ENCODE measurements at regions of chr2 and their contacts with region 1.

Region 1: DNA sequence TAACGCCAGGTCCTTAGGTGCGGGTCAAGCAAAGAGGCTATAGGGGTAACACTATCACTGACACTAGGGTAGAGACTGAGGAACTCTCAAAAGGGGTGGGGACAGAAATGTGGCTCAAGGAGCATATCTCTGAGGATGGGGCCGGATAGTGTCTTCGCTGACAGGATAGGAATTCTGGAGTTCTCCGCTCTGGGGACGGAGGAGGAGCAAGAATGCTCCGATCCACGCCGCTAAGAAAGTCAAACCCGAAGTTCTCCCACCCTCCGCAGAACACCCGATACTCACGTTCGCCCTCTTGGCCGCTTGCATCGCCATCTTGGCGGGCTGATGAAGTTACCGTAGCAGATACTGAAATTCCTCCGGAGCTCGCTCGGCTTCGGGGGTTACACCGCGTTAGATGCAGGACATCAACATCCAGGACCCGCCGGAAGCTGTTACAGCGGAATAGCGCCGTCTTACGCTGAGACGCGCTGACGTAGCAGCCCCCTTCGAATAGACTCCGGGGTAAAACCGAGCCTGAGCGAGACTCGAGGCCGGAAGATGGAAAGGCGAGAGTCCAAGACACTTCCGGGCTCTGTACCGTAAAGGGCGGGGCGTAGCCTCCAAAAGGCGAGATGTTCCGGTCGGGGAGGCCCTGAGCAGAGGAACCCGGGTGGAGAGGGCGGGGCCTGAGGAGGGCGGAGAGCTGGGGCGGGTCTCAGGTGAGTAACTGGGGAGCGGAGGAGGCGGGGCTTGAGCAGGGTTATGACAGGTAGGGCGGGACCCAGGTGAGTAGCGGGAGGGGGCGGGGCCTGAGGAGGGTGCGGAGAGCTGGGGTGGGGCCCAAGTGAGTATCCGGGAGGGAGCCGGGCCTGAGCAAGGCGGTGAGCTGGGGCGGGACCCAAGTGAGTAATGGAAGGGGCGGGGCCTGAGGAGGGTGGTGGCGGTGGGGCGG is at the start of gene SF3B6:
- DNase-seq: peak; percentile 97 to 100 (median 100)
- ATAC-seq: peak; percentile 89
- H3K4me3 ChIP-seq: peak within 1 kb of the TSS; percentile 97
- H3K4me3 Mint-ChIP-seq: peak within 1 kb of the TSS; percentile 93 to 99 (median 98)
- H3K27ac ChIP-seq: peak within 1 kb of the TSS; percentile 78
- H3K27ac Mint-ChIP-seq: peak within 1 kb of the TSS; percentile 96 to 99 (median 99)
- H3K4me1 ChIP-seq: peaks cover 13 to 21% of the 10 kb centered on the region in 2 donors
- H3K4me1 Mint-ChIP-seq: peaks cover 14 to 47% (median 42%) of the 10 kb centered on the region in 7 donors
- H3K27me3 ChIP-seq: no peaks in the 10 kb centered on the region
- H3K27me3 Mint-ChIP-seq: no peaks in the 10 kb centered on the region
- total RNA-seq, gene SF3B6: 42.4 to 100 (median 49.7) TPM

Region 2: DNA sequence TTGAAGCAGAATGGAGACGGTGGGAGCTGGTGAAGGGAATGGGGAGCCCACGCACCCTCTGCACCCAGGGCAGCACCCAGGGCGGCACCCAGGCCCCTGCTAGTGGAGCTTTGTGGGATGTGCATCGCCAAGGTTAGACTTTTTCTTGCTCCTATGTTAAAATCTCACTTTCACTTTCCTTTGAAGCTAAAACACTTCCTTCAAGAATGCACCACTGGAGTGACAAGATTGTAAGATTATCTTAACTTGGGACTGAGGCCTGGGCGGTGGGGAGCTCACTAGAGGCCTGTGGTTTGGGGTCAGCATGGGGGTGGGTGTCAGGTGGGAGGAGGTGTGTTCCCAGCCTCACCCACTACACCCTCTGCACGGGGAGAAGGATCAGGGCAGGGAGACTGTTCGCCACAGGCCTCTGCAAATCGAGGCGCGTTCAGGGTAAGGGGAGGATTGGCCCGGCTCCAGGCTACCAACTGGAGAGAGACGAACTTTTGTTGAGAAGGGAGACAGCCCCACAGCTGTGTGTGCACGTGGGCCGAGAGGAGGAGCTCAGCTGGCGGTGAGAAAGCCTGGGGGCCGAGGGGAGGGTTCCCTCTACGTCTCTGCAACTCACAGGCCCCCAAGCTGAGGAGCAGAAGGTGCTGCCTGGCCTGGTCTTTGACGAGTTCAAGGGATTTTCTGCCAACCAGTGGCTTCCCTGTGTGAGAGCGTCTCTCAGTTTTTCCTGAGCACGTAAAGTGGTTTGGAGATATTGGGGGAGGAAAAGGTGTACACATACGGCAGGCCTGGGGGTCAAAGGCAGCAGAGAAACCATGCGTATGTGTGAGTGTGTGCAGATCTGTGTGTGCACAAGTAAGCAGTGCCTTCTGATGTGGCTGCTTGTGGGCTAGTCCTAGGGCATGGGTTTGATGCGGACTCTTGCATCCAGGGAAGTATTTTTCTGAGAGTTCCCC is 543.5 kb before region 1 on chr2:
- CTCF ChIA-PET with region 1: no interaction called
- POLR2A ChIA-PET with region 1: no interaction called
- intact Hi-C with region 1: loop called in 1 of 2 experiments (anchors 5 kb)
- DNase-seq: peak; percentile 30 to 71 (median 64)
- ATAC-seq: peak; percentile 74
- H3K4me3 ChIP-seq: peak overlapping the region; percentile 72
- H3K4me3 Mint-ChIP-seq: peak overlapping the region; percentile 90 to 99 (median 95)
- H3K27ac ChIP-seq: peak overlapping the region; percentile 66
- H3K27ac Mint-ChIP-seq: peak overlapping the region; percentile 94 to 99 (median 98)
- H3K4me1 ChIP-seq: peaks cover 13 to 32% of the 10 kb centered on the region in 2 donors
- H3K4me1 Mint-ChIP-seq: peaks cover 39 to 68% (median 59%) of the 10 kb centered on the region in 7 donors
- H3K27me3 ChIP-seq: no peaks in the 10 kb centered on the region
- H3K27me3 Mint-ChIP-seq: no peaks in the 10 kb centered on the region

Region 3: GRCh38 chr2:23939987-23940717 is 136.0 kb before region 1 on chr2 and contains the start of gene UBXN2A:
- CTCF ChIA-PET with region 1: no interaction called
- POLR2A ChIA-PET with region 1: interaction called, 5 read pairs
- intact Hi-C with region 1: loop called (anchors 1 kb)
- DNase-seq: peak; percentile 59 to 85 (median 79)
- ATAC-seq: peak; percentile 96
- H3K4me3 ChIP-seq: peak within 1 kb of the TSS; percentile 94
- H3K4me3 Mint-ChIP-seq: peak within 1 kb of the TSS; percentile 85 to 97 (median 92)
- H3K27ac ChIP-seq: peak within 1 kb of the TSS; percentile 76
- H3K27ac Mint-ChIP-seq: peak within 1 kb of the TSS; percentile 85 to 94 (median 86)
- H3K4me1 ChIP-seq: peaks cover 6 to 14% of the 10 kb centered on the region in 2 donors
- H3K4me1 Mint-ChIP-seq: peaks cover 23 to 40% (median 34%) of the 10 kb centered on the region in 7 donors
- H3K27me3 ChIP-seq: no peaks in the 10 kb centered on the region
- H3K27me3 Mint-ChIP-seq: peaks cover 0 to 16% (median 7%) of the 10 kb centered on the region in 5 donors
- total RNA-seq, gene UBXN2A: 11.5 to 13.5 (median 12.4) TPM

Region 4: GRCh38 chr2:24123195-24123921 is 47.2 kb after region 1 on chr2 and contains the starts of genes FAM228B and PFN4:
- CTCF ChIA-PET with region 1: no interaction called
- POLR2A ChIA-PET with region 1: no interaction called
- intact Hi-C with region 1: loop called in 1 of 2 experiments (anchors 1 kb)
- DNase-seq: peak; percentile 12 to 76 (median 36)
- ATAC-seq: peak; percentile 93
- H3K4me3 ChIP-seq: peak within 1 kb of the TSS; percentile 56
- H3K4me3 Mint-ChIP-seq: peak within 1 kb of the TSS; percentile 74 to 91 (median 82)
- H3K27ac ChIP-seq: peak within 1 kb of the TSS; percentile 49
- H3K27ac Mint-ChIP-seq: peak within 1 kb of the TSS; percentile 36 to 79 (median 67)
- H3K4me1 ChIP-seq: peaks cover 0 to 5% of the 10 kb centered on the region in 2 donors
- H3K4me1 Mint-ChIP-seq: peaks cover 10 to 15% (median 15%) of the 10 kb centered on the region in 7 donors
- H3K27me3 ChIP-seq: no peaks in the 10 kb centered on the region
- H3K27me3 Mint-ChIP-seq: peaks cover 0 to 2% (median 0%) of the 10 kb centered on the region in 5 donors
- total RNA-seq, gene FAM228B: 7.8 to 27.5 (median 24.8) TPM
- total RNA-seq, gene PFN4: not detected

Region 5: GRCh38 chr2:24490674-24491625 is 414.8 kb after region 1 on chr2 and contains the start of gene NCOA1:
- CTCF ChIA-PET with region 1: no interaction called
- POLR2A ChIA-PET with region 1: no interaction called
- intact Hi-C with region 1: loop called in 1 of 2 experiments (anchors 2 kb)
- DNase-seq: peak; percentile 82 to 92 (median 90)
- ATAC-seq: peak; percentile 91
- H3K4me3 ChIP-seq: peak within 1 kb of the TSS; percentile 63
- H3K4me3 Mint-ChIP-seq: peak within 1 kb of the TSS; percentile 80 to 95 (median 90)
- H3K27ac ChIP-seq: peak within 1 kb of the TSS; percentile 93
- H3K27ac Mint-ChIP-seq: peak within 1 kb of the TSS; percentile 87 to 98 (median 93)
- H3K4me1 ChIP-seq: peaks cover 26 to 48% of the 10 kb centered on the region in 2 donors
- H3K4me1 Mint-ChIP-seq: peaks cover 46 to 62% (median 59%) of the 10 kb centered on the region in 7 donors
- H3K27me3 ChIP-seq: no peaks in the 10 kb centered on the region
- H3K27me3 Mint-ChIP-seq: peaks cover 0 to 11% (median 0%) of the 10 kb centered on the region in 5 donors
- total RNA-seq, gene NCOA1: 20.9 to 72.8 (median 46.6) TPM

Region 6: GRCh38 chr2:25041928-25042320 is 965.7 kb after region 1 on chr2 and contains the start of gene EFR3B:
- CTCF ChIA-PET with region 1: no interaction called
- POLR2A ChIA-PET with region 1: no interaction called
- intact Hi-C with region 1: loop called in 1 of 2 experiments (anchors 1 kb)
- DNase-seq: peak; percentile 77 to 88 (median 86)
- ATAC-seq: peak; percentile 99
- H3K4me3 ChIP-seq: peak within 1 kb of the TSS; percentile 73
- H3K4me3 Mint-ChIP-seq: peak within 1 kb of the TSS; percentile 79 to 91 (median 89)
- H3K27ac ChIP-seq: peak within 1 kb of the TSS; percentile 18
- H3K27ac Mint-ChIP-seq: peak within 1 kb of the TSS in 6 of 9 donors; percentile 8 to 88 (median 54)
- H3K4me1 ChIP-seq: peaks cover 13 to 17% of the 10 kb centered on the region in 2 donors
- H3K4me1 Mint-ChIP-seq: peaks cover 18 to 30% (median 20%) of the 10 kb centered on the region in 7 donors
- H3K27me3 ChIP-seq: peaks cover 7 to 8% of the 10 kb centered on the region in 2 donors
- H3K27me3 Mint-ChIP-seq: peaks cover 34 to 59% (median 37%) of the 10 kb centered on the region in 5 donors
- total RNA-seq, gene EFR3B: 0.05 to 0.08 (median 0.07) TPM in 3 of 5 experiments, not detected in the others

Region 7: DNA sequence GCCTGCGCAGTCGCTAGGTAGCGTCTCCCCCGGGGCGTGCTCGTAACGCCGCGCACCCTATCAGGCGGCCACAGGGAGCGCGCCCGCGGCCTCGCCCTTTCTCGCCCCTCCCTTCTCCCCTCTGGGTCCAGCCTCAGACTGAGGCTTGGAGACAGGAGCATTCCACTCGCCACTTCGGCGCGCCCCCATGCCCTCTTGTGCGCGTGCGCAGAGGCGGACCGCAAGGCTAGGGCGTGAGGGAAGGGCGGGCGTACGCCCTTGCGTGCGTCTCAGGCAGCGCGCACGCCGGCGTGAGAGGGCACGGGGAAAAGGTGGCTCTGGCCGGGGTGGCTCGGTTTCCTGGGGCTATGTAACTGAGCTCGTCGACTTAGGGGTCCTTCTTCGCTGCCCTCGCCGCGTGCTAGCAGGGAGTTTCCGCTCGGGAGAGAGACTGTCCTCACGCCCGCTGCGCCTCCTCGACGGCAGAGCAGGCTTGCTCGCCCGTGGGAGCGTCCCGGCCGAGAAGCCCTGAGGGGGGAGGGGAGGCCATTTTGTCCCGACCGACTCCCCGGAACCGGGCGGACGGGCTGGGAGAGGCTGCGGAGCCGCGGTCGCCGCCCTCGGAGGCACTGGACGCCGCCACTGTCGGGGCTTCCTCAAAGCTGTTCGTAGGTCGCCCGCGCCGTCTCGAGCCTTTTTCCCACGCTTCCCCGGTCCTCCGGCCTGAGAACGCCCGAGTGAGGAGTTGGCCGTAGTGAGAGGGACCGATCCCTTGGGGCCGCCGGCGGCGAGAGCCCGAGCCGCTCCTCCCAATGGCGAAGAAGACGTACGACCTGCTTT is 1957.8 kb after region 1 on chr2 and contains the start of gene RAB10:
- CTCF ChIA-PET with region 1: no interaction called
- POLR2A ChIA-PET with region 1: no interaction called
- intact Hi-C with region 1: loop called in 1 of 2 experiments (anchors 5 kb)
- DNase-seq: peak; percentile 98 to 100 (median 99)
- ATAC-seq: peak; percentile 95
- H3K4me3 ChIP-seq: peak within 1 kb of the TSS; percentile 96
- H3K4me3 Mint-ChIP-seq: peak within 1 kb of the TSS; percentile 90 to 99 (median 96)
- H3K27ac ChIP-seq: peak within 1 kb of the TSS; percentile 90
- H3K27ac Mint-ChIP-seq: peak within 1 kb of the TSS; percentile 86 to 97 (median 95)
- H3K4me1 ChIP-seq: peaks cover 18 to 24% of the 10 kb centered on the region in 2 donors
- H3K4me1 Mint-ChIP-seq: peaks cover 31 to 48% (median 41%) of the 10 kb centered on the region in 7 donors
- H3K27me3 ChIP-seq: no peaks in the 10 kb centered on the region
- H3K27me3 Mint-ChIP-seq: peaks cover 0 to 2% (median 0%) of the 10 kb centered on the region in 5 donors
- total RNA-seq, gene RAB10: 25.6 to 108 (median 60.5) TPM